GM13976 (cell line): ENCODE measurements at regions of chr6 and their contacts with region 1.

Region 1: GRCh38 chr6:20092071-20092566 is 120.2 kb downstream of the MBOAT1 start:
- DNase-seq: no peak
- CTCF ChIP-seq: peak; percentile 54

Region 2: GRCh38 chr6:20511852-20512251 is 419.7 kb after region 1 on chr6:
- in situ Hi-C with region 1: loop called (anchors 10 kb)
- DNase-seq: no peak
- CTCF ChIP-seq: no peak